Activated CD4-positive, alpha-beta T cell treated with anti-CD3 and anti-CD28 coated beads, Interleukin-2, amount 10 ng/mL, durations not matched to agents 24 days and 14 days (primary cell): ENCODE measurements at regions of chr10 and their contacts with region 1.

Region 1: DNA sequence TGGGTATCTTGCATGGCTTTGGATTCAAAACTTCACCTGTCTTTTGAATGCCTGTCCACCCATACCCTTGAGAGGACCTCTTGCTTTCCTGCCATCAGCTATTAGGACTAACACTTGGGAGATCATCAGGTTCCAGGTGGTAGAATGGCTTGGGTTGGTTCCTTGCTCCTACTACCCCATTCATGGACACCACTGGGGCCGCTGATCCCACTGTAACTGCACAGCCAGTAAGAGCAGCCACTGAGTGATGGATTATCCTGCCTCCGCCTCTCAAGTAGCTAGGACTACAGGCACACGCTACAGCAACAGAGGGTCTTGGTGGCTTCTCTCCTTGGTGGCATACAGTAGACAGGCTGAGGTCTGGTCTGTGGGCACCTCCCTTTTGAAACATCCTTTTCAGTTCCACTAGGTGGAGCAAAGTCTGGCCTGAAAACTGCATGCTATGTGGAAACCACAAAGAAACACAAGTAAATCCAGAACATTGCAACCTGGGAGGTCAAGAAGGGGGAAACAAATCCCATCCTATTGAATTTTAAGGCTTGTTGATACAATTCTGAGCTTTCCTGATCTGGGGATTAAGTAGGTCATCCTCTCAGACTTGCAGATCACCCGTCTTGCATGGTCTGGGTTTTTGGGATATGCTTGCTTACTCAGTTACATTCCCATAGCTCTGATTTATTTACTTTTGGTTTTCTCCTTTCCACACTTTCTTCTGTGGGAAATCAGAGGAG is 9.4 kb downstream of the WBP1L start:
- DNase-seq: peak; percentile 75
- H3K4me3 Mint-ChIP-seq: no peak overlapping the region
- H3K27ac Mint-ChIP-seq: peak overlapping the region; percentile 14
- H3K4me1 Mint-ChIP-seq: peaks cover 36% of the 10 kb centered on the region
- H3K27me3 Mint-ChIP-seq: no peaks in the 10 kb centered on the region

Region 2: DNA sequence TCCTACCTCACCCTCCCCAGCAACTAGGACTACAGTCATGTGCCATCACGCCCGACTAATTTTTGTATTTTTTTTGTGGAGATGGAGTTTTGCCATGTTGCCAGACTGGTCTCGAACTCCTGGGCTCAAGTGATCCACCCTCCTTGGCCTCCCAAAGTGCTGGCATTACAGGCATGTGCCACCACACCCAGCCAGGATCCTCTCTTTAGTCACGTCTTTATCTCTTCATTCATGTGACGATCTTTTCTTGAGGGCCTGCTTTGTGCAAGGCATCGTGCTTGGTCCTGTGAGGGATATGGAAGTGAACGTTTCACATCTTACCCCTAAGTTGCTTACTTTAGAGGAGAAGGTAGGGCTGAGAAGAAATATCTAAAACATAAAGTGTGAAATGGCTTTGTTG is 12.2 kb after region 1 on chr10:
- intact Hi-C with region 1: no loop called
- DNase-seq: no peak
- H3K4me3 Mint-ChIP-seq: no peak overlapping the region
- H3K27ac Mint-ChIP-seq: no peak overlapping the region
- H3K4me1 Mint-ChIP-seq: peaks cover 21% of the 10 kb centered on the region
- H3K27me3 Mint-ChIP-seq: no peaks in the 10 kb centered on the region

Region 3: DNA sequence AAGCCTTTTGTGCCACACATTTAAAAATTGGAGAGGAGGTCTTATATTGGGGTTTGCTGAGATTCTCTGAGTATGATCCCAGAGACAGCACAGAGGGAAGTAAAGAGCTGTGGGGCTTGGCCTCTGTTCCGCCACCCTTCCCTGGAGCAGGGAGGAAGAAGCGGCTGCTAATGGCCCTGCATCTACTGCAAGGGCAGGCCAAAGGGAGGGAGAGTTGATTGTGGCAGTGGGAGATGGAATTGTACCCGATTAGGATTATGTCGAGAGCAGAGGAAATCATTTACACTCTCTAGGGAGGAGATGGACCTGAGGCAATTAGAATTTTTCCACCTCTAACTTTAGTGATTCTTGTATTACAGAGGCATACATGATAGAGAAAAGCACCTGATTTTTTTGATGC is 55.3 kb after region 1 on chr10:
- intact Hi-C with region 1: loop called (anchors 5 kb)
- DNase-seq: no peak
- H3K4me3 Mint-ChIP-seq: no peak overlapping the region
- H3K27ac Mint-ChIP-seq: no peak overlapping the region
- H3K4me1 Mint-ChIP-seq: peaks cover 20% of the 10 kb centered on the region
- H3K27me3 Mint-ChIP-seq: no peaks in the 10 kb centered on the region

Region 4: DNA sequence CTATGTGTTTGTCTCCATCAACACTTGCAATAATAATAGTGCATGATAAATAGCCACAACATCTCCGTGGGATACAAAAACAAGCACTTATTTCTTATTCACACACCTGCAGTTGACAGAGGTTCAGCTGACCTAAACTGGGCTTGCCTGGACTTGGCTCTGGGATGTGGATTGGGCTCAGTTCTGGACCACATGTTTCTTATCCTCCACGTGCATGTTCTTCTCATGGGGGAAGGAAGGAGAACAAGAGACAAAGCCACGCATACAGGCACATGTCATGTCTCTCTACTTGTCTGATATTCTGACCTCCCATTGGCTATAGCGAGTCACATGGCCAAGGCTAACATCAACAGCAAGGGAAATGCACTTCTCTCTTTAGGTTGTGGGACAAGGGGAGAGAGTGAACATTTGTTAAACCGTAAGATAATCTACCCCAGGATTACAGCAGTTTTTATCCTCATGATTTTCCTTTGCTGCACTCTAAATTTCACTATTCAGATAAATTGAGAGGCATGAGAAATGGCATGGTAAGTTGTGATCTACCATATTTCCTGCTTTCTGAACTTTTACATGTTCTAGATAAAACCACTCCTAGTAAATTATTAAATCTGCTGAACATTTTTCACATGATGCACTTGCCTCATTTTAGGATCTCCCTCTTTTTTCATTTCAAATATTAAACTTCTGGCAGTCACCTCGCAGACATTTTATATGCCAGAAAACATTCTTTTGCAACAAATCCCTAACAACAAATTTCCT is 1634.2 kb after region 1 on chr10:
- intact Hi-C with region 1: no loop called
- DNase-seq: no peak
- H3K4me3 Mint-ChIP-seq: no peak overlapping the region
- H3K27ac Mint-ChIP-seq: no peak overlapping the region
- H3K4me1 Mint-ChIP-seq: peaks cover 11% of the 10 kb centered on the region
- H3K27me3 Mint-ChIP-seq: peaks cover 25% of the 10 kb centered on the region